ENCODE measurements at regions of chr7 and their contacts with region 1.

Region 1: DNA sequence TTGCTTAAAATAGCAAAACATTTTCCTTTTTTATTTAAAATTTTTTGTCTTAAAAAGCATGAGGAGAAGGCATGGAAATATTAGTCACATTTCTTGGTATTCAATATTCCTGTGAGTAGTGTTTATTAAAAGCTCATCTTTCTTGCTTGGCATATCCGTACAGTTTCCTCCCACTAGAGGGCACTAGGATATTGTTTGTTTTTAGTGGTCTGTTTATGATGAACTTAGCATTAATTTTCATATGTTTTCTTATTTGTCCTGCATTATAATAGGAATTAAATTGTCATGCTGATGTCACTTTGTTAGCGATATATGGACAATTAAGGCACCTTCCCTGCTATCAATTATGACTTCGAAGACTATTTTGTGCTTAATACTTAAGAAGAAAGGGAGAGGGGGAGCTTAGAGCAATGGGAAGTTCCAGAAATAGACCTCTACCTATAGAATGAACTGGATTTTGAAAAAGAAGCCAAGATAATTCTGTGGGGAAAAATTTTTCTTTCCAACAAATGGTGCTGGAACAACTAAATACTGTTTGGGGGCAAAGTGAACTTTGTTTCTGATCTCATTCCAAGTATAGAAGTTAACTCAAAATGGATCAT is 91.0 kb upstream of the STRIP2 start:
- DNase-seq: peak; percentile 56 to 77 (median 60)
- ATAC-seq: peak; percentile 93
- H3K4me3 ChIP-seq: no peak overlapping the region
- H3K27ac ChIP-seq: no peak overlapping the region
- H3K4me1 ChIP-seq: peaks cover 0 to 9% of the 10 kb centered on the region in 2 experiments; a peak in 2 of 5 replicates
- H3K27me3 ChIP-seq: no peaks in the 10 kb centered on the region
- CTCF ChIP-seq: peak; percentile 68 to 96 (median 72); a peak in 5 of 6 replicates
- EP300 ChIP-seq: no peak
- POLR2A ChIP-seq: no peak
- RAD21 ChIP-seq: peak; percentile 86 to 88

Region 2: GRCh38 chr7:129468087-129468486 is 124.9 kb after region 1 on chr7:
- CTCF ChIA-PET with region 1: interaction called, 80 read pairs
- POLR2A ChIA-PET with region 1: interaction called, 4 read pairs
- in situ Hi-C with region 1: no loop called
- intact Hi-C with region 1: loop called (anchors 1 kb)
- DNase-seq: no peak
- ATAC-seq: no peak
- H3K4me3 ChIP-seq: no peak overlapping the region
- H3K27ac ChIP-seq: no peak overlapping the region
- H3K4me1 ChIP-seq: no peaks in the 10 kb centered on the region
- H3K27me3 ChIP-seq: no peaks in the 10 kb centered on the region
- CTCF ChIP-seq: no peak
- EP300 ChIP-seq: no peak
- POLR2A ChIP-seq: no peak
- RAD21 ChIP-seq: no peak

Region 3: DNA sequence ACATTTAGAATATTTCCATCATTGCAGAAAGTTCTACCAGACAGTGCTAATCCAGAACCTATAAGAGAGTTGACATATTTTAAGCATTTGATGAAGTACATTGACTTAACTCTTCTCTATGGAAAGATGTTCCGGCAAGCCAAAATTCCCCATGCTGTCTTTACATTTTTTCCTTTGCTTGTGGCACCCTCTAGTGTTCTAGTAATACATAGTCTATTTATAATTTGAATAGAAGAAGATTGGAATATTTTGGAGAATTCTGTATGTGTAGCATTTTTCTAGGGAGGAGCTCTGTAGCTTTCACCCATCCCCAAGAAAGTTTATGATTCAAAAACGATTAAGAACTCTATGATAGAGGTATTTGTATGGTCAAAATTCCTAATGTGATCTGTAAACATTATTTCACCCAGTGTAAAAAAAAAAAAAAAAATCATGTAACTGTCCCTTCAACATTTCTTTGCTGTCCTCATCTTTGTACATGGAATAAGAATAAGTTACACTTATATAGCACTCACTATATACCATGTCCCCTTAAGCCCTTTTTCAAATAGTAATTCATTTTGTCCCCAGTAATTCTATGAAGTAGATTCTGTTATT is 301.5 kb after region 1 on chr7:
- CTCF ChIA-PET with region 1: interaction called, 30 read pairs
- POLR2A ChIA-PET with region 1: no interaction called
- in situ Hi-C with region 1: no loop called
- intact Hi-C with region 1: loop called (anchors 1 kb)
- DNase-seq: peak in 3 of 4 experiments; percentile 31 to 71 (median 35)
- ATAC-seq: peak; percentile 81
- H3K4me3 ChIP-seq: no peak overlapping the region
- H3K27ac ChIP-seq: no peak overlapping the region
- H3K4me1 ChIP-seq: no peaks in the 10 kb centered on the region
- H3K27me3 ChIP-seq: no peaks in the 10 kb centered on the region
- CTCF ChIP-seq: peak; percentile 61 to 86 (median 66); a peak in 5 of 6 replicates
- EP300 ChIP-seq: no peak
- POLR2A ChIP-seq: no peak
- RAD21 ChIP-seq: peak; percentile 86 to 91

Region 4: GRCh38 chr7:129835569-129835968 is 492.4 kb after region 1 on chr7:
- CTCF ChIA-PET with region 1: no interaction called
- POLR2A ChIA-PET with region 1: no interaction called
- in situ Hi-C with region 1: no loop called
- intact Hi-C with region 1: no loop called
- DNase-seq: peak in 2 of 4 experiments; percentile 60 to 69
- ATAC-seq: peak; percentile 59
- H3K4me3 ChIP-seq: no peak overlapping the region
- H3K27ac ChIP-seq: no peak overlapping the region
- H3K4me1 ChIP-seq: peaks cover under 1 to 23% of the 10 kb centered on the region in 2 experiments; a peak in 3 of 5 replicates
- H3K27me3 ChIP-seq: no peaks in the 10 kb centered on the region
- CTCF ChIP-seq: no peak
- EP300 ChIP-seq: no peak; the same call in 1 of the 2 replicates
- POLR2A ChIP-seq: no peak
- RAD21 ChIP-seq: no peak

Measured in K562 (cell line).